ENCODE measurements at regions of chr14 and their contacts with region 1.

Region 1: GRCh38 chr14:34539407-34540180 is at the start of gene EAPP:
- DNase-seq: peak; percentile 98
- H3K4me3 Mint-ChIP-seq: peak within 1 kb of the TSS; percentile 95
- H3K27ac Mint-ChIP-seq: peak within 1 kb of the TSS; percentile 98
- H3K4me1 Mint-ChIP-seq: peaks cover 32% of the 10 kb centered on the region
- H3K27me3 Mint-ChIP-seq: no peaks in the 10 kb centered on the region
- total RNA-seq, gene EAPP: 34.0 to 35.4 TPM

Region 2: GRCh38 chr14:34461334-34462131 is 78.1 kb before region 1 on chr14:
- CTCF ChIA-PET with region 1: no interaction called
- intact Hi-C with region 1: loop called (anchors 5 kb)
- DNase-seq: peak; percentile 41
- H3K4me3 Mint-ChIP-seq: peak overlapping the region; percentile 87
- H3K27ac Mint-ChIP-seq: peak overlapping the region; percentile 65
- H3K4me1 Mint-ChIP-seq: peaks cover 16% of the 10 kb centered on the region
- H3K27me3 Mint-ChIP-seq: no peaks in the 10 kb centered on the region

Region 3: DNA sequence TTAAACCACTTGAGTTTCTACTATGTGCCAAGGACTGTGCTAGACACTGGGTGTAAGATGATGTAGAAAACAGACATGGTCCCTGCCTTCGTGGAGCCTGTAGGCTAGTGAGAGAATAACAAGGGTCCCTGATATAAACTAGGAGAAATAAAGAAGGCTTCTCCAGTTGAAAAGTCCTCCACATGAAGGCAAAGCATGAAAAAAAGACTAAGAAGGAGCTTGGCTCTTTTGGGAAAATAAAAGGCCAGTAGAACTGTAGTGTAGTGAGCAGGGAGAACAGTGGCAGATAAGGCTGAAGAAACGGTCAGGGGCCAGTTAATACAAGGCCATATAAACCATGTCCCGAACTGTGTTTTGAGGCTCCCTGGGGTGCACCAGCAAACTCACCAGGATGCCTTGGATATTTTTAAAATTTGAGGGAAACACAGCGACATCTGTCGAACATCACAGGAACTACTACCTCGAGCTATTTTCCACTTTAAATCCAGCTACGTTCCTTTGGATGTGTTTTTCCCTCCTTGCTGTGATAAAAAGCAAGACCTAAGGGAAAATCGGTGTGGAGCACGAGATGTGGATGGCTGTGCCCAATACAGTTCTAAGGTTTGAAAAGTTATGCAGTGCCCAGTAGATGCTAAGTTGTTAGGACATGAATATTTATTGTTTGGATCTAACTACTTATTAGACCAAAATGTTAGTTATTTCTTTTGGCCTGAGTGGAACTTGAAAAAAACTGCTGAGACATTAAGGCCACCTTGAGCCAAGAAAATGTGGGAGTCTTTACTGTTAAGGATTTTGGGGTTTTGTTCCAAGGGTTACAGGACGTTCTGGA is 183.3 kb after region 1 on chr14:
- CTCF ChIA-PET with region 1: no interaction called
- intact Hi-C with region 1: no loop called
- DNase-seq: peak; percentile 54
- H3K4me3 Mint-ChIP-seq: no peak overlapping the region
- H3K27ac Mint-ChIP-seq: no peak overlapping the region
- H3K4me1 Mint-ChIP-seq: no peaks in the 10 kb centered on the region
- H3K27me3 Mint-ChIP-seq: no peaks in the 10 kb centered on the region

Region 4: DNA sequence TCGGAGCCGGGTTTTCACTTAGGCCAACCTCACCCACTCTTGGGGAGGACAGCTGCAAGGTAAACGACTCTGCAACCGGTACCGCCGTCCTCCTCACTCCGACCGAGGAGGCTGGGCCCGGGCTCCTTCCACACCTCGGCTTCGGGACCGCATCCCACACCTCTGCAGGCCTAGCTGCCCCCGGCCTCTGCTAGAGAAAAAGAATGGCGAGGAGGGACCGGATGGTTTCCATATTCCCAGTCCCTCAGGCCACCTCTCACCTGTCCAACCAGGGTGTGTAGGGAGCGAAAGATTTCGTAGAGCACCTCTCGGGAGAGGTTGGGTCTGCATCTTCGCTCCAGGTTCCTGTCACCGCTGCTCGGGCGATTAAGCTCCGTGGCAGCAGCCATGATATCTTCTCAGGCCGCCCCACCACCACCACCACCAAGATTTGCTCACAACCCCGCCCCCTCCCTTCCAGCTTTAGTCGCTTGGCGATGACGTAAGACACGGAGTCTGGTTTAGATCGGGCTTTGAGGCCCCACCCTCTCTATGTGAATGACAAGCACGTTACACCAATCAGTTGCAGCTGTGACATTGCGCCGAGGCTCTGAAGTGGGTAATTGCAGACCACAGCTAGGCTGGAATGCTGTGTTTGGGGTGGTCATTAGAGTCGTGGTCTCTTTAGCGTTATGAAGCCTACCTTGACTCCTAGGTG is 1780.8 kb after region 1 on chr14 and contains the start of gene MBIP:
- CTCF ChIA-PET with region 1: no interaction called
- intact Hi-C with region 1: loop called (anchors 5 kb)
- DNase-seq: peak; percentile 98
- H3K4me3 Mint-ChIP-seq: peak within 1 kb of the TSS; percentile 97
- H3K27ac Mint-ChIP-seq: peak within 1 kb of the TSS; percentile 96
- H3K4me1 Mint-ChIP-seq: peaks cover 27% of the 10 kb centered on the region
- H3K27me3 Mint-ChIP-seq: peaks cover 5% of the 10 kb centered on the region
- total RNA-seq, gene MBIP: 29.9 to 30.8 TPM

Measured in activated naive CD4-positive, alpha-beta T cell treated with anti-CD3 and anti-CD28 coated beads for 36 hours (primary cell).